Pancreas (tissue), 10 donors: ENCODE measurements at regions of chr12 and their contacts with region 1.

Region 1: GRCh38 chr12:16359512-16360491 is 12.4 kb downstream of the MGST1 start:
- DNase-seq: peak; percentile 23 to 86 (median 64)
- ATAC-seq: peak; percentile 75 to 92 (median 83)
- H3K4me3 ChIP-seq: no peak overlapping the region
- H3K27ac ChIP-seq: no peak overlapping the region
- H3K4me1 ChIP-seq: no peaks in the 10 kb centered on the region
- H3K27me3 ChIP-seq: no peaks in the 10 kb centered on the region
- CTCF ChIP-seq: peak; percentile 35 to 64 (median 52)

Region 2: DNA sequence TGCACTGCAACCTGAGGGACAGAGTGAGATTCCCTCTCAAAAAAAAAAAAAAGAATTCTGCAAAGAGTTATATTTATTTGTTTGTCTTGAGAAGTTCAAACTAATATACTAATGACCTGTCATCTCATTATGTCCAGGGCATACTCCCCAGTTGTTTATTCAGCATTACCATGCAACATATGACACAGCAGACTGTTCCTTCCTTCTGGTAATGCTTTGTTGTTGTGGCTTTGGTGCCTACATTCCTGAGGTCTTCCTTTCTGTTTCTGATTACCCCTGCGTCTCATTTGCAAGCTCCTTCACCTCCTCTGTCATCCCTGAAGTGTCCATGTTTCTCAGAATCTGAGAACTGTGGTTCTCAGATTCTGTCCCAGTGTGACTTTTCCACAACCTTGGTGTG is 393.4 kb before region 1 on chr12:
- intact Hi-C with region 1: no loop called
- DNase-seq: no peak
- ATAC-seq: no peak
- H3K4me3 ChIP-seq: no peak overlapping the region
- H3K27ac ChIP-seq: no peak overlapping the region
- H3K4me1 ChIP-seq: no peaks in the 10 kb centered on the region
- H3K27me3 ChIP-seq: no peaks in the 10 kb centered on the region
- CTCF ChIP-seq: no peak

Region 3: GRCh38 chr12:16189849-16190248 is 170.0 kb before region 1 on chr12:
- intact Hi-C with region 1: loop called in 1 of 3 experiments (anchors 10 kb)
- DNase-seq: peak in 1 of 6 donors; percentile 10
- ATAC-seq: peak in 3 of 4 donors; percentile 40 to 75 (median 54)
- H3K4me3 ChIP-seq: no peak overlapping the region
- H3K27ac ChIP-seq: no peak overlapping the region
- H3K4me1 ChIP-seq: no peaks in the 10 kb centered on the region
- H3K27me3 ChIP-seq: no peaks in the 10 kb centered on the region
- CTCF ChIP-seq: no peak

Region 4: GRCh38 chr12:16238661-16239060 is 121.1 kb before region 1 on chr12:
- intact Hi-C with region 1: no loop called
- DNase-seq: no peak
- ATAC-seq: peak in 1 of 4 donors; percentile 21
- H3K4me3 ChIP-seq: no peak overlapping the region
- H3K27ac ChIP-seq: no peak overlapping the region
- H3K4me1 ChIP-seq: no peaks in the 10 kb centered on the region
- H3K27me3 ChIP-seq: no peaks in the 10 kb centered on the region
- CTCF ChIP-seq: no peak